Right cardiac atrium (tissue), 5 donors: ENCODE measurements at regions of chr20 and their contacts with region 1.

Region 1: DNA sequence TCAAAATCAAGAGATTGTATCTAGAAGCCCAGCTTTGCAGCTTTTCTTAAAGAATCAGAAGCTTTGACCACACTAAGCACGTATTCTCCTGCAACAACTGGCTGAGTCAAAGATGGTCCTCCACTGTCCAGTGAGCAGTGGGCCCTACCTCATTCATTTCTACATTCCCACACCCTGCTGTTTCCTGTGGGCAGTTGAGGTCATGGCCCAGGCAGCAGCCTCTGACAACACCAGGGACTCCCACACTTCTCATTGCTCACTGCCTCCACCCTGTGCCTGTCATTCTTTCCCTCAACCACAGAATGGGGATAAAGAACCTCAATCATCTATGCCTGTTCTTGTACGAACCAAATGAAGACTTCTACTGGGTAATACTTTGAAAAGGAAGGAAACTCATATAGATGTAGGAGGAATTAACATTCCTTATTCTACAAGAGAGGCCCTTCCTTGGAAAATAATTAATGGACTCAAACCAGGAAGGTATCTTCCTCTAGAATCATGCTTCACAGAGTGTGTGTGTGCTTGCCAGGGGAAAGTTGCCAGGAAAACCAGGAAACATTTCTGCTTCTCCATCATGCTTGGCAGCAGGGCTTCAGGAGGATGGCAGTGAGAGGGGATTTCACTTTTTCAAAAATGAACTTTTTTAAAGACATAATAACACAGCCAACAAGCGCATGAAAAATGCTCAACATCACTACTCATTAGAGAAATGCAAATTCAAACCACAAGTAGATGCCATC is 191.7 kb upstream of the RIN2 start:
- DNase-seq: no peak
- ATAC-seq: no peak
- H3K4me3 ChIP-seq: no peak overlapping the region
- H3K27ac ChIP-seq: no peak overlapping the region
- H3K4me1 ChIP-seq: no peaks in the 10 kb centered on the region
- H3K27me3 ChIP-seq: no peaks in the 10 kb centered on the region

Region 2: GRCh38 chr20:19419396-19419795 is 147.0 kb before region 1 on chr20:
- intact Hi-C with region 1: loop called in 1 of 4 experiments (anchors 10 kb)
- DNase-seq: no peak
- ATAC-seq: no peak
- H3K4me3 ChIP-seq: no peak overlapping the region
- H3K27ac ChIP-seq: no peak overlapping the region
- H3K4me1 ChIP-seq: no peaks in the 10 kb centered on the region
- H3K27me3 ChIP-seq: no peaks in the 10 kb centered on the region

Region 3: DNA sequence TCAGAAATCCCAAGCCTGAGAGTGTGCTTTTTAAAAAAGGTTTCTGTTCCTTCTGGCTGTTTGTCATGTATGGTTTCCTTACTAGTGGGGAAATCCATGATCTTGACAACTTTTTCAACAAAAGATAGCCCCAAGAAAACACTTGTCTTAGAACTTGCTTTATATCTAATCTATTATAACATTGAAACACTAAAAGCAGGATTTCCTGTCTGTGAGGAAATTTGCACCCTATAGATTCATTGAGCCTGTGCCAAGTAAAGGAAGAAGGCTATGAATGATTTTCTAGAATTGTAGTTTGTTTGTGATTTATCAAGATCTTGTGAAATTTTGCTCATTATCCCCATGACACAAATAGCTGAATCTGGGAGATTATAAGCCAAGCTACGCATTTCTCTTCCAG is 46.9 kb before region 1 on chr20:
- intact Hi-C with region 1: no loop called
- DNase-seq: no peak
- ATAC-seq: no peak
- H3K4me3 ChIP-seq: no peak overlapping the region
- H3K27ac ChIP-seq: no peak overlapping the region
- H3K4me1 ChIP-seq: no peaks in the 10 kb centered on the region
- H3K27me3 ChIP-seq: no peaks in the 10 kb centered on the region